ENCODE measurements at regions of chr16 and their contacts with region 1.

Region 1: DNA sequence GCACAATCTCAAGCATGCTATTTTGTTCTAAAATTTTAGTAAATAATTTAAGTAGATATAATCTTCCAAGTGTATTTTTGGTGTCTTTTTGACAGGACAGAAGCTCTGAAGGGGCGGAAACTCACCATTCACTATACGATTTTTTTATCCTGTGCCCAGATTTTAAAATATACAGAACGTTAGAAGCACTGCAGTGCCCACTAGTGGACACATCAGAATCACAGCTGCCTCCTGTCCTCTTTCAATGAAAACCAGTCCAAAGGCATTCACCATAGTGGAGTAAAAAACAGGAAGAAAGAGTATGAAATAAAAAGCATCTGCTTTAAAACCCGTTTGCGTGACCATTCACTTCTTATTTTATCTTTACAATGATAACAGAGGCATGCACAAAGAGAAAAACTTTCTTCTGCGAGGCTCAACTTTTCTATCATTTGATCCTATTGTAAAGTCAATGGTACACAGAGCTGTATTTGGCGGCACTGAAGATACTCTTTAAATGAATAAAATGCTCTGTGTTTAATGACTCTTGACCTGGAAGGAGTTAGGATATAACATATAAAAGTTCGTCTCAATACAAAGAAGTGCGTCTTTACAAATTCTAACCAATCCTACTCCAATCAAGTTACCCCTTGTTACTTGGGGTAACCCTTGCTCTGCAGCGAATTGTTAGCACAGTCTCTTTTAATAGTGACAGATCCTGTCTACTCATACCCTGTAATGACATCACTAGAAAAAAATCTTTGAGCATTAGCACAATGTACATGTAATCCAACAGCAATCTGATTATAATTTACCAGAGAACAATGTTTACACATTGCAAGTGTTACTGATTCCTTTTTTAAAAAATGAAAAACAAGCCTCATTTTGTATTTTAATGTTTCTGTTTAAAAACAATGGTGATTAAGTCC is 339.8 kb upstream of the PSMD7 start:
- DNase-seq: peak; percentile 73
- H3K4me3 Mint-ChIP-seq: no peak overlapping the region
- H3K27ac Mint-ChIP-seq: no peak overlapping the region
- H3K4me1 Mint-ChIP-seq: no peaks in the 10 kb centered on the region
- H3K27me3 Mint-ChIP-seq: peaks cover 71% of the 10 kb centered on the region
- CTCF ChIP-seq: peak; percentile 69

Region 2: DNA sequence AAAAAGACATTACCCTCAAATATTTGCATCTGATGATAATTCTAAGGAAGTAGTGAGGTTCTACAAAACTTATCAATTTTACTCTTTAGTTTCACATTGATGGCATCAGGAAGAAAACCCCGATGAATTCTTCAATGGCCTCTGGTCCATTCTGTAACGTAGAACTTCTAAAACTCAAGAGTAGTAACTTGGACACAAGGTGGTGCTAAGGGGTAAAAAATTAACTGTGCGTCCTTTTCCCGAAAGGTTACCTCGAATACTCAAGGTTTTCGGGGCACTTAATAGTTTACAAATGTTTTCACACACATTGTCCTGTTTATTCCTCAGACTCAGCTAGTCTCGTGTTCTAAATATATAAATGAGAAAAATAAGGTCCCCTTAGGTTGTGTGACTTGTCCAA is 391.6 kb before region 1 on chr16:
- CTCF ChIA-PET with region 1: interaction called, 3 read pairs
- intact Hi-C with region 1: loop called (anchors 1 kb)
- DNase-seq: peak; percentile 19
- H3K4me3 Mint-ChIP-seq: no peak overlapping the region
- H3K27ac Mint-ChIP-seq: no peak overlapping the region
- H3K4me1 Mint-ChIP-seq: no peaks in the 10 kb centered on the region
- H3K27me3 Mint-ChIP-seq: peaks cover 45% of the 10 kb centered on the region
- CTCF ChIP-seq: no peak

Region 3: DNA sequence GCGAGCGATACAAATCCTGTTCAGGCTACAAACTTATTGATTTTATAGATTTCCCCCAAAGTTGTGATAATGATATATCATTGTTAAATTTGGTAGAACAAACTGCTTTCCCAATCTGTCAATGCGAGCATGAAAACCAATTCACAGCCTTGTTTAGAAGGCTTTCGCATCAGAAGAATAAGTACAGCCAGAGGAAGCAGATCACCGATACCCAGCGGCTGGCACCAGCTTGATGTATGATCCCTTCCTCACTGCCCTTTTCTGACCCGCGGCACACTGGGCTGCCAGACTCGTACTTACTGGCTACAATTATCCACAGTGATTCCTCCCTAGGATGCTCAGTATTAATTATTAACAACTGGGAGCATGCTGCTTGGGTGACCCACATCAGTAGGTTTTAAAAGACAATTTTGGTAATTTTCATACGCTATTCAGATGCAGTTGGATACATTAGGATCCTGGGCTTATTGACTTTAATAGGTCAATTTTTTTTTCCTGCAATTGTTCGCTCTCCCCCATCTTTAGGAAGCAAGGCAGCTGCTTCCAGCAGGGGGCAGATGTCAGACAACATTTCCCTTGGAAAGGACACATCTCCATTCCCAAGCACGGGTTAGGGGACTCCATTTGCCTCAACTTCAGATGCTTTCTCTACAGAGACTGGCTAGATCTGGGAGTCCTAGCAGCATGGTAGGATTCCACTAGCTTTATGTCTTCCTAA is 242.9 kb before region 1 on chr16:
- CTCF ChIA-PET with region 1: no interaction called
- intact Hi-C with region 1: loop called (anchors 10 kb)
- DNase-seq: peak; percentile 65
- H3K4me3 Mint-ChIP-seq: no peak overlapping the region
- H3K27ac Mint-ChIP-seq: no peak overlapping the region
- H3K4me1 Mint-ChIP-seq: peaks cover 7% of the 10 kb centered on the region
- H3K27me3 Mint-ChIP-seq: peaks cover 38% of the 10 kb centered on the region
- CTCF ChIP-seq: peak; percentile 67

Region 4: GRCh38 chr16:74275002-74275636 is 318.3 kb after region 1 on chr16:
- CTCF ChIA-PET with region 1: no interaction called
- intact Hi-C with region 1: loop called (anchors 5 kb)
- DNase-seq: no peak
- H3K4me3 Mint-ChIP-seq: no peak overlapping the region
- H3K27ac Mint-ChIP-seq: no peak overlapping the region
- H3K4me1 Mint-ChIP-seq: no peaks in the 10 kb centered on the region
- H3K27me3 Mint-ChIP-seq: peaks cover 68% of the 10 kb centered on the region
- CTCF ChIP-seq: peak; percentile 32